ENCODE measurements at regions of chr7 and their contacts with region 1.

Region 1: DNA sequence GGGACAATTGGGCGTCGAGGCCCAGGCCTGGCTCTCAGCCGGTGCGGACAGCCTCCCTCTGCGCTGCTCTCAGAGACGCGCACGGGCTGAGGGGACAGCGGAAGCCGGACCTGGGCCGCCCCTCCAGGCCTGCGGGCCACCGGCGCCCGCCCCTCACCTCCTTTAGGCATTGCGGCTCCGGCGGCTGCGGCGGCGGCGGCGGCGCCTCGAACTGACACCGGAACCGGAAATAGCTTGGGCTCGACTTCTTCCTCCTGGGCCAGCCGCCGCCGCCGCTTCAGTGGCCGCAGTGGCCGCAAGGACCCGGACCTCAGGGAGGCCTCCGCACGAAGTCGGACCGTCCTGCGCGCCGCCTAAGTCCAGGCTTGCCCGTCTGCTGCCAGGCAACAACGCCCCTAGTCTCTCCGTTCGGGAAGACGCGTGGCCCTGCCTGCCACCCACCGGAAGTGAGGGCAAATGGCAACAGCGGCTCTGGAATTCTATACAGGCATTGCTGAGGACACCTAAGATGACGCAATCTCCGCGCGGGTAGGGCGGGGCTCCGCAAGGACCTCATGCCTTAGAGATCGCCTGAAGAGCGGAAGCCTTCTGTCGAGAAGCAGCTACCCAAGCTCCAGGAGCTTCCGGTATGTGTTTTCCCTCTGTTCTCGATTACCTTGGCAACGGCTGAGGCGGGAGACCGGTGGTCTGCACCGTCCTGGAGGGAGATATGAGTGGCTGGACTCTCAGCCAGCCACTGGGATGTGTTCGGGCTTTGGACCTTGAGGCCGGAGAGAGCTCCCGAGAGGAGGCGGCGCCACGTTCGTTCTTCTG is at the starts of genes BUD31 and PDAP1:
- DNase-seq: peak; percentile 91 to 99 (median 93)
- ATAC-seq: peak; percentile 91
- H3K4me3 ChIP-seq: peak within 1 kb of the TSS; percentile 66 to 84
- H3K4me3 Mint-ChIP-seq: peak within 1 kb of the TSS; percentile 94
- H3K27ac ChIP-seq: peak within 1 kb of the TSS; percentile 83 to 96
- H3K27ac Mint-ChIP-seq: peak within 1 kb of the TSS; percentile 99
- H3K4me1 ChIP-seq: peaks cover 35% of the 10 kb centered on the region
- H3K4me1 Mint-ChIP-seq: peaks cover 62% of the 10 kb centered on the region
- H3K27me3 ChIP-seq: no peaks in the 10 kb centered on the region
- H3K27me3 Mint-ChIP-seq: no peaks in the 10 kb centered on the region
- CTCF ChIP-seq: peak; percentile 19
- total RNA-seq, gene BUD31: 144 TPM
- total RNA-seq, gene PDAP1: 34.5 to 36.2 TPM

Region 2: GRCh38 chr7:98500764-98501163 is 907.8 kb before region 1 on chr7:
- CTCF ChIA-PET with region 1: no interaction called
- POLR2A ChIA-PET with region 1: no interaction called
- intact Hi-C with region 1: no loop called
- DNase-seq: no peak
- ATAC-seq: no peak
- H3K4me3 ChIP-seq: no peak overlapping the region
- H3K4me3 Mint-ChIP-seq: no peak overlapping the region
- H3K27ac ChIP-seq: no peak overlapping the region
- H3K27ac Mint-ChIP-seq: no peak overlapping the region
- H3K4me1 ChIP-seq: no peaks in the 10 kb centered on the region
- H3K4me1 Mint-ChIP-seq: no peaks in the 10 kb centered on the region
- H3K27me3 ChIP-seq: no peaks in the 10 kb centered on the region
- H3K27me3 Mint-ChIP-seq: peaks cover 12% of the 10 kb centered on the region
- CTCF ChIP-seq: no peak

Region 3: DNA sequence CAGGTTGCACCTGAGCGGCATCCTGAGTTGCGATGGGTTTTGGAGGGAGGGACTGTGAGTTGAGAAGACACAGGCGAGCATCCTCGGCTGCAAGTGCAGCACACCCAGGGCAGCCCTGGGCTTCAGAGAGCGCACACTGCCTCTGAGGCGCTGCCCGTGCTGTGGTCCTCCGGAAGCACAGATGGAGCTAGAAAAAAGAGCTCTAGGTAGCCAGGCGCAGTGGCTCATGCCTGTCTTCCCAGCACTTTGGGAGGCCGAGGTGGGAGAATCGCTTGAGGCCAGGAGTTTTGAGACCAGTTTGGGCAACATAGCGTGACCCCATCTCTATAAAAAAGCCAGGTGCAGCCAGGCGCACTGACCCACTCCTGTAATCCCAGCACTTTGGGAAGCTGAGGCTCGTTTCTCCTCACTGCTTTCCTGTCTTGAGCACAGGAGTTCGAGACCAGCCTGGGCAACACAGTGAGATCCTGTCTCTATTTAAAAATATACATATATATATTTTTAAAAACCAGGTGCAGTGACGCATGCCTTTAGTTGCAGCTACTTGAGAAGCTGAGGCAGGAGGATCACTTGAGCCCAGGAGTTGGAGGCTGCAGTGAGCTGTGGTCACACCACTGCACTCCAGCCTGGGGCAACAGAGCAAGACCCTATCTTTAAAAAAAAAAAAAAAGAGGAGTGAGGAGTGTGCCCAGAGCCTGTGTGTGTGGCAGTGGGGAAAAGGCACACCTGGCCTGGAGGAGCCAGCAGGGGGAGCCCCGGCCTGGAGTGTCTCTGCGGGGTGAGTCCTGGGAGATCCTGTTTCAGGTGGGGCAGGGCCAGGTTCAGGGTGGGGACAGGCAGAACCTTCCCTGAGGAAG is 43.4 kb before region 1 on chr7:
- CTCF ChIA-PET with region 1: interaction called, 23 read pairs
- POLR2A ChIA-PET with region 1: interaction called, 7 read pairs
- intact Hi-C with region 1: loop called (anchors 1 to 2 kb)
- DNase-seq: peak; percentile 43 to 79 (median 75)
- ATAC-seq: peak; percentile 94
- H3K4me3 ChIP-seq: no peak overlapping the region
- H3K4me3 Mint-ChIP-seq: no peak overlapping the region
- H3K27ac ChIP-seq: no peak overlapping the region
- H3K27ac Mint-ChIP-seq: no peak overlapping the region
- H3K4me1 ChIP-seq: no peaks in the 10 kb centered on the region
- H3K4me1 Mint-ChIP-seq: no peaks in the 10 kb centered on the region
- H3K27me3 ChIP-seq: no peaks in the 10 kb centered on the region
- H3K27me3 Mint-ChIP-seq: no peaks in the 10 kb centered on the region
- CTCF ChIP-seq: peak; percentile 65

Region 4: DNA sequence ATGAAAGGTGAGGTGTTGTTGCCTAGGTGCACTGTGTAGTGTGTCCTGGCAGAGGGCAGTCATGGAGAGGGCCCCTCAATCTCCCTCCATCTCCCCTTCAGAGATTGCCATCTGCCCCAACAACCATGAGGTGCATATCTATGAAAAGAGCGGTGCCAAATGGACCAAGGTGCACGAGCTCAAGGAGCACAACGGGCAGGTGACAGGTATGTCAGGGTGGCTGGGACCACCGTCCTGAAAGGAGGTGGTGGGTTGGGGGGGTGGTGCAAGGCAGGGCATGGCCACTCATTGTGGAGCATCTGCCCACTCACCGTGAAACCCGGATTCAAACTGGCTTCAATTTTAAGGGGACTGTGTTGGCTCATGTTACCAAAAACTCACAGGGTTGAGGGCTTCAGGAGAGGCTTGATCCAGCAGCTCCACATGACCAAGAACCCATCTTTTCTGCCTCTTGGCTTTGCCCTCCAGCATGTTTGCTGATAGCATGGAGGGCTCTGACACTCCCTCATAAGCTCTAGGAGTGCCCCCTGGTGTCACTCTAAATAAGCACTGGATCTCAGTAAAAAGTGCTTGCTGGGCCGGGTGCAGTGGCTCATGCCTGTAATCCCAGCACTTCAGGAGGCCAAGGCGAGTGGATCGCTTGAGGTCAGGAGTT is 21.9 kb before region 1 on chr7:
- CTCF ChIA-PET with region 1: interaction called, 11 read pairs
- POLR2A ChIA-PET with region 1: interaction called, 57 read pairs
- intact Hi-C with region 1: loop called (anchors 1 kb)
- DNase-seq: peak in 5 of 9 experiments; percentile 47 to 73 (median 60)
- ATAC-seq: peak; percentile 75
- H3K4me3 ChIP-seq: no peak overlapping the region
- H3K4me3 Mint-ChIP-seq: no peak overlapping the region
- H3K27ac ChIP-seq: no peak overlapping the region
- H3K27ac Mint-ChIP-seq: peak overlapping the region; percentile 75
- H3K4me1 ChIP-seq: peaks cover 20% of the 10 kb centered on the region
- H3K4me1 Mint-ChIP-seq: peaks cover 27% of the 10 kb centered on the region
- H3K27me3 ChIP-seq: no peaks in the 10 kb centered on the region
- H3K27me3 Mint-ChIP-seq: no peaks in the 10 kb centered on the region
- CTCF ChIP-seq: peak; percentile 27

Region 5: DNA sequence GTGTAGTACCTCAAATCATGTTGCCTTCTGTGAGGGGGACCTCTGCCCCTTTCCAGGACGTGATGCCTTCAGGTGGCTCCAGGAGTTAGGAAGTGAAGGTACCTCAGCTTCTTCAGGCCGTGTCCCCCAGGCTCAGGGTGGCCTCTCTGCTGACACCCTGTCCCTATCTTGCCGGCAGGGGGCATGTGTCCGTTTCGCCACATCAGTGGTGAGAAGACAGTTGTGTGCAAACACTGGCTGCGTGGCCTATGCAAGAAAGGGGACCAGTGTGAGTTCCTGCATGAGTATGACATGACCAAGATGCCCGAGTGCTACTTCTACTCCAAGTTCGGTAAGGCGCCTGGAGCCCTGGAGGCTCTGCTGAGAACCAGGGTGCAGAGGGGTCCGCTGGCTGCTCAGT is 39.4 kb after region 1 on chr7:
- CTCF ChIA-PET with region 1: no interaction called
- POLR2A ChIA-PET with region 1: no interaction called
- intact Hi-C with region 1: no loop called
- DNase-seq: no peak
- ATAC-seq: no peak
- H3K4me3 ChIP-seq: no peak overlapping the region
- H3K4me3 Mint-ChIP-seq: no peak overlapping the region
- H3K27ac ChIP-seq: no peak overlapping the region
- H3K27ac Mint-ChIP-seq: no peak overlapping the region
- H3K4me1 ChIP-seq: no peaks in the 10 kb centered on the region
- H3K4me1 Mint-ChIP-seq: peaks cover 6% of the 10 kb centered on the region
- H3K27me3 ChIP-seq: no peaks in the 10 kb centered on the region
- H3K27me3 Mint-ChIP-seq: no peaks in the 10 kb centered on the region
- CTCF ChIP-seq: no peak

Region 6: GRCh38 chr7:99465421-99465768 is 56.8 kb after region 1 on chr7:
- CTCF ChIA-PET with region 1: no interaction called
- POLR2A ChIA-PET with region 1: interaction called, 4 read pairs
- intact Hi-C with region 1: loop called in 1 of 2 experiments (anchors 1 kb)
- DNase-seq: no peak
- ATAC-seq: no peak
- H3K4me3 ChIP-seq: peak overlapping the region; percentile 77 to 92
- H3K4me3 Mint-ChIP-seq: peak overlapping the region; percentile 96
- H3K27ac ChIP-seq: peak overlapping the region; percentile 61 to 82
- H3K27ac Mint-ChIP-seq: peak overlapping the region; percentile 96
- H3K4me1 ChIP-seq: peaks cover 13% of the 10 kb centered on the region
- H3K4me1 Mint-ChIP-seq: peaks cover 39% of the 10 kb centered on the region
- H3K27me3 ChIP-seq: no peaks in the 10 kb centered on the region
- H3K27me3 Mint-ChIP-seq: no peaks in the 10 kb centered on the region
- CTCF ChIP-seq: no peak

Region 7: DNA sequence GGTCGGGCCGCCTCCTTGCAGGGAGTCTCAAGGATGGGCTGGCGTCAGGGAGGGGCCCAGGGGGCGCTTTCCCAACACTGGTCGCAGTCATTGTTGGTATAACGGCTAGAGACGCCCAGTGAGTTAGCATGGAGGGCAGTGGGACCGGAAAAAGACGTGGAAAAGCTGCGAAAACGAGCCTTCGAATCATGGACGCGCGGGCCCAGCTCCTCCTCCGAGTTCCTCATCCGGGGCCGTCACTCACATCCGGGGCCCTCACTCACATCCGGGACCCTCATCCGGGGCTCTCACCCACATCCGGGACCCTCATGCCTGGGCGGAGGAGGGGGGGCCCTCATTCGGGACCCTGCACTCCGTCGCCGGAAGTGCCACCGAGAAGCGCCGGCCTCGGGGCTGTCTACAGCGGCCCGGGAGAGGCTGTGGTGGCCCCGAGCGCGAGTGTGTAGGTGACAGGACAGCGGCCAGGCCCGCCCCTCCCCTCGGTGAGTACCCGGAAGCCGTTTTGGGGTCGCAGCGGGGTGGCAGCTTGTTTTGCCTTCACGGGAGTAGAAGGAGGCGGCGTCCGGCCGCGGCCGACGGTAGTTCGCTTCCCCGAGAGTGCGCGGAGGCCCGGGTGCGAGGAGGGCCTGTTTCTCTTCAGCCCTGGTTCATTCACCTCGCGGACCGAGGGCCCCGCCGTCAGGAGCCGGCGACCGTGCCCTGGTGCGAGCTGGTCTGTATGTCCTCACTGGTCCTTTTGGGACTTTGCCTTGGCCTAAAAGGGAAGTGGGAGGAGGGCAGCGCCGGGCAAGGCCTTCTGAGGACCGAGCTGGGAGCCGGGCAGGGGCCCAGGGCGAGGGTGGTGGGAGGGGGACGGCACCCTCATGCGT is 150.0 kb after region 1 on chr7 and contains the start of gene ZNF655:
- CTCF ChIA-PET with region 1: no interaction called
- POLR2A ChIA-PET with region 1: interaction called, 4 read pairs
- intact Hi-C with region 1: loop called (anchors 1 kb)
- DNase-seq: peak; percentile 83 to 97 (median 93)
- ATAC-seq: peak; percentile 81
- H3K4me3 ChIP-seq: peak within 1 kb of the TSS; percentile 72 to 97
- H3K4me3 Mint-ChIP-seq: peak within 1 kb of the TSS; percentile 98
- H3K27ac ChIP-seq: peak within 1 kb of the TSS; percentile 98 to 99
- H3K27ac Mint-ChIP-seq: peak within 1 kb of the TSS; percentile 98
- H3K4me1 ChIP-seq: peaks cover 40% of the 10 kb centered on the region
- H3K4me1 Mint-ChIP-seq: peaks cover 57% of the 10 kb centered on the region
- H3K27me3 ChIP-seq: no peaks in the 10 kb centered on the region
- H3K27me3 Mint-ChIP-seq: no peaks in the 10 kb centered on the region
- CTCF ChIP-seq: no peak
- total RNA-seq, gene ZNF655: 177 to 186 TPM

Region 8: DNA sequence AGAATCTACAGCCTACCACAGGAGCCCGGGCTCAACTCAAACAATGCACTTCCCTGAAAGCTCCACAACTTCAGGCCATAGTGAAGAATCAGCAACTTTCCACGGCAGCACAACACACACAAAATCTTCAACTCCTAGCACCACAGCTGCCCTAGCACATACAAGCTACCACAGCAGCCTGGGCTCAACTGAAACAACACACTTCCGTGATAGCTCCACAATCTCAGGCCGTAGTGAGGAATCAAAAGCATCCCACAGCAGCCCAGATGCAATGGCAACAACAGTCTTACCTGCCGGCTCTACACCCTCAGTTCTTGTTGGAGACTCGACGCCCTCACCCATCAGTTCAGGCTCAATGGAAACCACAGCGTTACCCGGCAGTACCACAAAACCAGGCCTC is 1583.0 kb after region 1 on chr7:
- CTCF ChIA-PET with region 1: no interaction called
- POLR2A ChIA-PET with region 1: no interaction called
- intact Hi-C with region 1: no loop called
- DNase-seq: no peak
- ATAC-seq: no peak
- H3K4me3 ChIP-seq: no peak overlapping the region
- H3K4me3 Mint-ChIP-seq: no peak overlapping the region
- H3K27ac ChIP-seq: no peak overlapping the region
- H3K27ac Mint-ChIP-seq: no peak overlapping the region
- H3K4me1 ChIP-seq: no peaks in the 10 kb centered on the region
- H3K4me1 Mint-ChIP-seq: no peaks in the 10 kb centered on the region
- H3K27me3 ChIP-seq: no peaks in the 10 kb centered on the region
- H3K27me3 Mint-ChIP-seq: no peaks in the 10 kb centered on the region
- CTCF ChIP-seq: no peak